ENCODE measurements at regions of chr1 and their contacts with region 1.

Region 1: DNA sequence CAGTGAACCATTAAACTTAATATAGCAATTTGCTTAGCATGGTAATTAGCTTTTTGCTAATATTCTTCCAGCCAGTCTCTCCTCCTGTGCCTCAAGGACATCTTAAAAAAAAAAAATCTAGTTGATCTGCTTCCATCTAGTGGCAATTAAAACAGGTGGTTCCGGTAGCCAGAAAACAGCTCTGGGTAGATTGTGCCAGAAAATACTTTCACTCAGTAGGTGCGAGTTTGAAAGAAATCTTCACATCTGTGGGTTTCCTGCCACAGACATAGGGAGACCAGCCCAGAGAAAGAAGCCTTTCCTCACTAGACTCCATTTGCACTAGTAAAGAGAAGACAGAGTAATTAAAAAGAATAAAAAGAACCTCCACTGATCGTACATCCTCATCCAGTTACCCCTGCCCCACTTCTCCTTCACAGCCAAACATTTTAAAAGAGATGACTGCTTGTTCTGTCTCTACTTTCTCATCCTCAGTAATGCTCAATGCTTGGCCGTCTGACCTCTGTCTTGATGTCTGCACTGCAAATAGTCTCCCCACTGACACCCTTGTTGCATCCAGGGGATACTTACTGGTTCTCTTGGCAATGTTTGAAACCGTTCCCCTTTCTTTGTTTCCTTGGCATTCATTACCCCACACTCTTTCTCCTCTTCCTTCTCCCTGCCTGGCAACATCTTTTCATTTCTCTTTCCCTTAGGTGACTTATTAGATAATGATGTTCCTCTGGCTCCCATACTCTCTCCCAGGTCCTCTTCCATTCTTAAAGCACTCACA is 16.9 kb downstream of the SELL start:
- DNase-seq: no peak
- ATAC-seq: peak; percentile 9
- H3K4me3 Mint-ChIP-seq: peak overlapping the region; percentile 62
- H3K27ac Mint-ChIP-seq: peak overlapping the region; percentile 90
- H3K4me1 Mint-ChIP-seq: peaks cover 97% of the 10 kb centered on the region
- H3K27me3 Mint-ChIP-seq: no peaks in the 10 kb centered on the region
- CTCF ChIP-seq: no peak

Region 2: DNA sequence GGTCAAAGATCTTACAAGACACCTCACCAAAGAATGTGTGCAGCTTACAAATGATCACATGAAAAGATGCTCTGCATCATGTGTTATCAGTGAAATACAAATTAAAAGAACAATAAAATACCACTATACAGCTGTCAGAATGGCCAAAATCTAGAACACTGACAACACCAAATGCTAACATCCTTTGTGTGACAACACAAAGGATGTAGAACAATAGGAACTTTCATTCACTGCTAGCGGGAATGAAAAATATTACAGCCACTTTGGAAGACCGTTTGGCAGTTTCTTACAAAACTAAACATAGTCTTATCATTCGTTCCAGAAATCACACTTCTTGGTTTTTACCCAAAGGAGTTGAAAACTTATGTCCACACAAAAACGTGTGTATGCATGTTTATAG is 43.9 kb before region 1 on chr1:
- CTCF ChIA-PET with region 1: interaction called, 4 read pairs
- POLR2A ChIA-PET with region 1: no interaction called
- intact Hi-C with region 1: loop called (anchors 5 kb)
- DNase-seq: no peak
- ATAC-seq: no peak
- H3K4me3 Mint-ChIP-seq: no peak overlapping the region
- H3K27ac Mint-ChIP-seq: no peak overlapping the region
- H3K4me1 Mint-ChIP-seq: peaks cover 19% of the 10 kb centered on the region
- H3K27me3 Mint-ChIP-seq: no peaks in the 10 kb centered on the region
- CTCF ChIP-seq: no peak

Region 3: DNA sequence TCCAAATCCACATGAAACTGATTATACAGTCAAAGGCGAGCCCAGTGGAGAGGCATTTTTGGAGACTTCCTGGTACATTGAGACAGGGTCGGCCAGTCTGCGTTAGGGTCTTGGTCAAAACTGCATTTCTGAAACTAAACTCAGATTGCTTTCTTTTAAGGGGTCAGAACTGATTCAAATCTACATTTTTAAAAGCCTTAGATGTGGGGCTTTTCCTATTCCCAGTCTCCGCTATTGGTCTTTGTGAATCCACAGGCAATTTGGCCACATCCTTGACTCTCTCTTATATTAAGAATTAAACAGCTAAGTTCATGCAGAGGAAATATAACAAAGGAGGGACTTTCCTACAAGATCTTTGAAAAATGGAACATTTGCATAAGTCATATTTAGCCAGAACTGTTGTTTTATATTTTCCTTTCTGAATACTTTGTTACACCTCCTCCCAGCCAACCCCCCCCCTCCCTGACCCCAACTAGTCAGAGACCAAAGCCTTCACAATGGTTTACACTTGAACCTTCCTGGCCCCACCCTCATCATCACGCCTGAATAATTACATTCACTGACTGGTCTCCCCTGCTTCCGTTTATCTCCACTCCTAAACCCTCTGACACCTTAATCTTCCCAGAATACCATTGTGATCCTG is 14.0 kb before region 1 on chr1:
- CTCF ChIA-PET with region 1: interaction called, 17 read pairs
- POLR2A ChIA-PET with region 1: interaction called, 119 read pairs
- intact Hi-C with region 1: loop called (anchors 1 kb)
- DNase-seq: no peak
- ATAC-seq: peak; percentile 84
- H3K4me3 Mint-ChIP-seq: peak overlapping the region; percentile 57
- H3K27ac Mint-ChIP-seq: peak overlapping the region; percentile 91
- H3K4me1 Mint-ChIP-seq: peaks cover 65% of the 10 kb centered on the region
- H3K27me3 Mint-ChIP-seq: no peaks in the 10 kb centered on the region
- CTCF ChIP-seq: no peak

Region 4: GRCh38 chr1:169874229-169874628 is 179.7 kb after region 1 on chr1:
- CTCF ChIA-PET with region 1: no interaction called
- POLR2A ChIA-PET with region 1: no interaction called
- intact Hi-C with region 1: no loop called
- DNase-seq: no peak
- ATAC-seq: no peak
- H3K4me3 Mint-ChIP-seq: no peak overlapping the region
- H3K27ac Mint-ChIP-seq: peak overlapping the region; percentile 32
- H3K4me1 Mint-ChIP-seq: peaks cover 39% of the 10 kb centered on the region
- H3K27me3 Mint-ChIP-seq: no peaks in the 10 kb centered on the region
- CTCF ChIP-seq: no peak

Measured in activated B cell treated with CpG ODN at 0.5 μM for 24 hours (primary cell).